ENCODE measurements at regions of chr2 and their contacts with region 1.

Region 1: GRCh38 chr2:207847807-207848544 is 78.3 kb upstream of the FZD5 start:
- DNase-seq: peak; percentile 57
- H3K4me3 ChIP-seq: no peak overlapping the region
- CTCF ChIP-seq: no peak

Region 2: GRCh38 chr2:207692206-207693065 is 155.5 kb before region 1 on chr2:
- CTCF ChIA-PET with region 1: no interaction called
- POLR2A ChIA-PET with region 1: no interaction called
- DNase-seq: no peak
- H3K4me3 ChIP-seq: no peak overlapping the region
- CTCF ChIP-seq: peak; percentile 33

Region 3: DNA sequence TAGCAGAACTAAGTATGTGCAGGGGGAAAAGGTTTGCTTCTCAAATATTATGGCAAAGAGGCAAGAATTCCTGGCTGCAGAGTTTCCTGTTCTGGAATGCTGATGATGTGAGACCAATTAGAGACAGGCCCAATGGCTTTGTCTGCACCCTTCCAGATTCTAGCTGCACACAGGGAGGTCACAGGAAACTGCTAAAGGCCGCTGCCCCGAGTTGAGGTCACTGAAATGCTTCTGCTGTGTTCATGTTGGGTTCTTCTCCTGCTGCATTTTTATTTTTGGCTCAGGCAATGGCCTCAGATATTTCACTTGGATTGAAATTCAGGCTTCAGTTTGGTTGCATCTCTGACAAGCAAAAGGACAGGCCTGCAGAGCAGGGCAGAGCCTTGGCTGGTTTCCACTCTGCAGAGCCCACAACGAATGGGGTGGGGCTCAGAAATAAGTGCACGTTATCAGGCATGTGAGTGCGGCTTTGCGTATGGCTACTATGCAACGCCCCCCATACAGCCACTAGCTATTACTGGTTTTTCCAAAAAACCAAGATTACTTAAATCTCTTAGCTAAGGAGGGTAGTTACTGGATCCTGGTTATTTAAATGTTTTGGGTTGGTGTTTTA is 11.3 kb before region 1 on chr2:
- CTCF ChIA-PET with region 1: interaction called, 10 read pairs
- POLR2A ChIA-PET with region 1: no interaction called
- DNase-seq: no peak
- H3K4me3 ChIP-seq: no peak overlapping the region
- CTCF ChIP-seq: no peak

Measured in AG04449 (cell line).